ENCODE measurements at regions of chr3 and their contacts with region 1.

Region 1: GRCh38 chr3:111978493-111979433 is at the start of gene ABHD10:
- DNase-seq: peak; percentile 98
- ATAC-seq: peak; percentile 94
- H3K4me3 ChIP-seq: peak within 1 kb of the TSS; percentile 84 to 95 (median 84)
- H3K4me3 Mint-ChIP-seq: peak within 1 kb of the TSS; percentile 91
- H3K27ac ChIP-seq: peak within 1 kb of the TSS; percentile 72 to 75
- H3K27ac Mint-ChIP-seq: peak within 1 kb of the TSS; percentile 92
- H3K4me1 ChIP-seq: peaks cover 26 to 29% of the 10 kb centered on the region in 2 donors
- H3K4me1 Mint-ChIP-seq: peaks cover 38% of the 10 kb centered on the region
- H3K27me3 ChIP-seq: no peaks in the 10 kb centered on the region
- H3K27me3 Mint-ChIP-seq: no peaks in the 10 kb centered on the region
- CTCF ChIP-seq: no peak
- total RNA-seq, gene ABHD10: 40.1 and 43.2 TPM in 2 replicates

Region 2: DNA sequence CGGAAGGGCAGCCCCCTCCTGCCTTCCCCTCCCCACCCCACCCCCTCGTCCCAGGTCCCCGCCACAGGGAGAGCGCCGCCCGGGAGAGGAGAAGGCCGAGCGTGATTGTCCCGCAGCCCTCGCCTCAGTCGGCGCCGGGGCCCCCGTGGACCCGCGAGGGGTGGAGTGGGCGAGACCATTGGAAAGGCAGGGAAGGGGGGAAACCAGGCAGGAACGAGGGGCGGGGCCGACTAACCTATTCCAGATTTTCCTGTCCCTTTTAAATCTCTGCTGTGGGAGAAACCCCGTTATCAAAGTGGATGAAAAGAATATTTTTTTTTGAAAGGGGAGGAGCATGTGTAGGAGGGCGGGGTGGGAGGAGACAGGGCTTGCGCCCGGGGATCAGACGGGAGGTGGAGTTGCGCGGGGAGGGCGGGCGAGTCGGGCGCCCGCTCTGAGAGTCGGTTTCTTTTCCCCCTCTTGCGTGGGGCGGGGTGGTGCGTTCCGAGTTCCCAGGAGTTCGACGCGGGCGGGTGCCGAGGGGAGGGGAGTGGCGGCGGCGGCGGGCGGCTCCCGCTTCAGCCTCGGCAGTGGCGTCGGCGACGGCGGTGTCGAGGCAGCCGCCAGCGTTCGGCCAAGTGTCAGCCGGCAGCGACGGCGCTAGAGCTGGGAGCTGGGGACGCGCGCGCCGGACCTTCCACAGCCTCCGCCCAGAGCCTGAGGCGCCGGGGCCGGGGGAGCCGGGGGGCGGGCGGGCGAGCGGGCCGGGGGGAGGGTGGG is 907.3 kb before region 1 on chr3 and contains the start of gene NECTIN3:
- CTCF ChIA-PET with region 1: no interaction called
- POLR2A ChIA-PET with region 1: no interaction called
- intact Hi-C with region 1: loop called (anchors 10 kb)
- DNase-seq: peak; percentile 86
- ATAC-seq: peak; percentile 88
- H3K4me3 ChIP-seq: peak within 1 kb of the TSS; percentile 35 to 68 (median 52)
- H3K4me3 Mint-ChIP-seq: peak within 1 kb of the TSS; percentile 93
- H3K27ac ChIP-seq: no peak within 1 kb of the TSS
- H3K27ac Mint-ChIP-seq: peak within 1 kb of the TSS; percentile 64
- H3K4me1 ChIP-seq: peaks cover 25 to 27% of the 10 kb centered on the region in 2 donors
- H3K4me1 Mint-ChIP-seq: peaks cover 30% of the 10 kb centered on the region
- H3K27me3 ChIP-seq: peaks cover 0 to 46% (median 39%) of the 10 kb centered on the region in 4 experiments
- H3K27me3 Mint-ChIP-seq: peaks cover 42% of the 10 kb centered on the region
- CTCF ChIP-seq: no peak
- total RNA-seq, gene NECTIN3: 1.9 and 2.9 TPM in 2 replicates

Region 3: GRCh38 chr3:111859974-111860859 is 118.5 kb before region 1 on chr3:
- CTCF ChIA-PET with region 1: no interaction called
- POLR2A ChIA-PET with region 1: interaction called, 3 read pairs
- intact Hi-C with region 1: loop called (anchors 2 kb)
- DNase-seq: peak; percentile 85
- ATAC-seq: peak; percentile 72
- H3K4me3 ChIP-seq: peak overlapping the region; percentile 78 to 90 (median 87)
- H3K4me3 Mint-ChIP-seq: peak overlapping the region; percentile 93
- H3K27ac ChIP-seq: peak overlapping the region; percentile 56 to 76
- H3K27ac Mint-ChIP-seq: peak overlapping the region; percentile 80
- H3K4me1 ChIP-seq: peaks cover 11 to 18% of the 10 kb centered on the region in 2 donors
- H3K4me1 Mint-ChIP-seq: peaks cover 19% of the 10 kb centered on the region
- H3K27me3 ChIP-seq: peaks cover 0 to 14% (median 5%) of the 10 kb centered on the region in 4 experiments
- H3K27me3 Mint-ChIP-seq: peaks cover 14% of the 10 kb centered on the region
- CTCF ChIP-seq: peak; percentile 51

Region 4: DNA sequence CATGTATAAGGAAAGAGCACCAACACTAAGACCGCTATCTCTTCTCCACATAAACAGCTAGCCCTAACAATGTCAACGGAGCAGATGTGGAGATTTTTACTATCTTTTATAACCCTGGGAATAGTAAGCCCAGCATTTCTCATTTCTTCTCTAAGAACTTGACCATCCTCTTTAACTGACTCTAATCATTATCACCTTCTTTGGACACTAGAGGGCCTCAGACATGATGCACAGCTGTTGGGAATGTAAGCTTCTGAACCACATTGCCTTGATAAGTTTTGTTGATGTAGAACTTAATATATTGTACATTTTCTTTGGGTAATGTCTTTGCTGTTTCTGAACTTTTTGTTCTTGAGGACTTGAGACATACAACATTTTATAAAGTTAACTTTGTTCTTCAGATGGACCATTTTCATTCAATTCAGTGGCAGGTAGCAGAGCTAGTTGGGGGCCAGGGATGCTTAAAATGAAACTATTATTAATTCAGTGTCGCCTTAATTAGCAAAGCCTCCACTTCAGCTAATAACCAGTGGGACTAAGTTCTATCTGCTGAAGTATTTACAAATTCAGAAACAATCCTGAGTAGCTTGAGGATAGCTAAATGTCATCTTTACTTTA is 10.4 kb after region 1 on chr3:
- CTCF ChIA-PET with region 1: interaction called, 22 read pairs
- POLR2A ChIA-PET with region 1: interaction called, 3 read pairs
- intact Hi-C with region 1: loop called (anchors 1 kb)
- DNase-seq: peak; percentile 55
- ATAC-seq: peak; percentile 76
- H3K4me3 ChIP-seq: no peak overlapping the region
- H3K4me3 Mint-ChIP-seq: no peak overlapping the region
- H3K27ac ChIP-seq: no peak overlapping the region
- H3K27ac Mint-ChIP-seq: no peak overlapping the region
- H3K4me1 ChIP-seq: no peaks in the 10 kb centered on the region
- H3K4me1 Mint-ChIP-seq: peaks cover 12% of the 10 kb centered on the region
- H3K27me3 ChIP-seq: no peaks in the 10 kb centered on the region
- H3K27me3 Mint-ChIP-seq: no peaks in the 10 kb centered on the region
- CTCF ChIP-seq: peak; percentile 80

Region 5: DNA sequence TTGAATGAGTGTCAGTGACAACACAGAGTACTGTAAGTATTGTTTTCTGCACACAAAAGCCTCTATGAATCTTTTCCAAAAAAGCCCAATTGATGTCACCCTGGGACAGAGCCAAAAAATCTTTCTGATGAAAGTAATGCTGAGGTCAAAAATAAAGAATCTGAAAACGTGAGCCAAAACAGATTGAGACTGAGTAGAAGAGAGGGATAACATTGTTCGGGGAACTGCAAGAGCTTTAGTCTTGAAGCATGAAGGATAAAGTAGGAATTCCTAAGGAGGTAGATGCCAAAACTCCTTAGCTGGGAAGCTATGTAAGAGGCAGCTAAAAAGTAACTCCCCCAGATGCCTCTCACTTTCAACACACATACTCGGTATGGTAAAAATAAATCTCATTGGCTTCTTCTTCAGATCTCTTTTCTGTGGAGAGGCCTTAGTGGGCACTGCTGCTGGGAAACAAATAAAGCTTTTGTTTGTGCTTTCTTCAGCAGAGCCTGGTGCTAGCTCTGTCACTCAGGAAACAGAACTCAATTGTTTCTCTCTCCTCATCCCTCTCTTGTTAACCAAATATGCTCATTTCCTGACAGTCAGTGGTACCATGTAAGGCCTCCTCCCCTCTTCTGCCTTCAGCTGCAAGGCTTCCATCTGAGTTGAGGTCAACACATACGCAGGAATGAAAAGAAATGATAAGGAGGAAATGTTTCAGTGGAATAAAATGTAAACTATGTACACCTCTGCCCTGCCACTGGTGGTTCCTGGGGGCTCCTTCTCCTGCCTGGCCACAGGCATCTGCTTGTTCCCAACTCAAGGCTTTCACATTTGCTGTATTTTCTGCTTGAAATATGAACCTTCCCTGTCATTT is 412.2 kb after region 1 on chr3:
- CTCF ChIA-PET with region 1: no interaction called
- POLR2A ChIA-PET with region 1: no interaction called
- intact Hi-C with region 1: no loop called
- DNase-seq: no peak
- ATAC-seq: peak; percentile 33
- H3K4me3 ChIP-seq: no peak overlapping the region
- H3K4me3 Mint-ChIP-seq: peak overlapping the region; percentile 6
- H3K27ac ChIP-seq: peak overlapping the region in 1 of 2 donors; percentile 7
- H3K27ac Mint-ChIP-seq: peak overlapping the region; percentile 12
- H3K4me1 ChIP-seq: peaks cover 17 to 19% of the 10 kb centered on the region in 2 donors
- H3K4me1 Mint-ChIP-seq: peaks cover 35% of the 10 kb centered on the region
- H3K27me3 ChIP-seq: no peaks in the 10 kb centered on the region
- H3K27me3 Mint-ChIP-seq: no peaks in the 10 kb centered on the region
- CTCF ChIP-seq: no peak

Region 6: GRCh38 chr3:113885050-113885449 is 1906.3 kb after region 1 on chr3:
- CTCF ChIA-PET with region 1: no interaction called
- POLR2A ChIA-PET with region 1: no interaction called
- intact Hi-C with region 1: no loop called
- DNase-seq: no peak
- ATAC-seq: no peak
- H3K4me3 ChIP-seq: no peak overlapping the region
- H3K4me3 Mint-ChIP-seq: no peak overlapping the region
- H3K27ac ChIP-seq: no peak overlapping the region
- H3K27ac Mint-ChIP-seq: no peak overlapping the region
- H3K4me1 ChIP-seq: no peaks in the 10 kb centered on the region
- H3K4me1 Mint-ChIP-seq: no peaks in the 10 kb centered on the region
- H3K27me3 ChIP-seq: no peaks in the 10 kb centered on the region
- H3K27me3 Mint-ChIP-seq: no peaks in the 10 kb centered on the region
- CTCF ChIP-seq: no peak

Measured in B cell (primary cell).